ENCODE measurements at regions of chr2 and their contacts with region 1.

Region 1: DNA sequence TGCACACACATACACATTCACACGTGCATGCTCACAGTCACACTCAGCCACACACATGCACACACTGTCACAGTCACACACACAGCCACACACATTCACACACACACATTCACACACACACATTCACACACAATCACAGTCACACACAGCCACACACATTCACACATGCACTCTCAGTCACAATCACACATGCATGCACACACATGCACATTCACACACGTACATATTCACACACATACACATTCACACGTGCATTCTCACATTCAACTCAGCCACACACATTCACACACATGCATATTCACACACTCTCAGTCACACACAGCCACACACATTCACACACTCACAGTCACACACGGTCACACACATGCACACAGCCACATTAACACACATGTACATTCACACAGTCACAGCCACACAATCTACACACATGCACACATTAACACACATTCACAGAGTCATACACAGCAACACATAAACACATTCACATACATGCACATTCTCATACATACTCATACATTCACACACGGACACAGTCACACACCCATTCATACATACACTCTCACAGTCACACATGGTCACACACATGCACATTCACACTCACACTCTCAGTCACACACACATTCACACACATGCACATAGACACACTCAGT is 239.8 kb downstream of the EIPR1 start:
- DNase-seq: no peak
- ATAC-seq: no peak
- H3K4me3 ChIP-seq: no peak overlapping the region
- H3K27ac ChIP-seq: no peak overlapping the region
- H3K4me1 ChIP-seq: no peaks in the 10 kb centered on the region
- H3K27me3 ChIP-seq: peaks cover 5 to 17% of the 10 kb centered on the region in 2 experiments; a peak in 3 of 5 replicates
- CTCF ChIP-seq: no peak
- EP300 ChIP-seq: no peak
- POLR2A ChIP-seq: no peak
- RAD21 ChIP-seq: no peak

Region 2: GRCh38 chr2:3065928-3066327 is 71.8 kb before region 1 on chr2:
- CTCF ChIA-PET with region 1: no interaction called
- POLR2A ChIA-PET with region 1: no interaction called
- in situ Hi-C with region 1: loop called (anchors 5 kb)
- intact Hi-C with region 1: no loop called
- DNase-seq: no peak
- ATAC-seq: no peak
- H3K4me3 ChIP-seq: no peak overlapping the region
- H3K27ac ChIP-seq: no peak overlapping the region
- H3K4me1 ChIP-seq: no peaks in the 10 kb centered on the region
- H3K27me3 ChIP-seq: peaks cover 24 to 59% of the 10 kb centered on the region in 2 experiments
- CTCF ChIP-seq: no peak
- EP300 ChIP-seq: no peak
- POLR2A ChIP-seq: no peak
- RAD21 ChIP-seq: no peak

Measured in K562 (cell line).